ENCODE measurements at regions of chr16 and their contacts with region 1.

Region 1: GRCh38 chr16:30472328-30472942 is at the start of gene ITGAL:
- DNase-seq: peak; percentile 63 to 96 (median 80)
- ATAC-seq: peak; percentile 83
- H3K4me3 ChIP-seq: peak within 1 kb of the TSS; percentile 83
- H3K4me3 Mint-ChIP-seq: peak within 1 kb of the TSS; percentile 96
- H3K27ac ChIP-seq: peak within 1 kb of the TSS; percentile 75 to 94
- H3K27ac Mint-ChIP-seq: peak within 1 kb of the TSS; percentile 90
- H3K4me1 ChIP-seq: peaks cover 81% of the 10 kb centered on the region
- H3K4me1 Mint-ChIP-seq: peaks cover 70% of the 10 kb centered on the region
- H3K27me3 ChIP-seq: no peaks in the 10 kb centered on the region
- H3K27me3 Mint-ChIP-seq: no peaks in the 10 kb centered on the region
- CTCF ChIP-seq: no peak
- total RNA-seq, gene ITGAL: 186 to 187 TPM

Region 2: DNA sequence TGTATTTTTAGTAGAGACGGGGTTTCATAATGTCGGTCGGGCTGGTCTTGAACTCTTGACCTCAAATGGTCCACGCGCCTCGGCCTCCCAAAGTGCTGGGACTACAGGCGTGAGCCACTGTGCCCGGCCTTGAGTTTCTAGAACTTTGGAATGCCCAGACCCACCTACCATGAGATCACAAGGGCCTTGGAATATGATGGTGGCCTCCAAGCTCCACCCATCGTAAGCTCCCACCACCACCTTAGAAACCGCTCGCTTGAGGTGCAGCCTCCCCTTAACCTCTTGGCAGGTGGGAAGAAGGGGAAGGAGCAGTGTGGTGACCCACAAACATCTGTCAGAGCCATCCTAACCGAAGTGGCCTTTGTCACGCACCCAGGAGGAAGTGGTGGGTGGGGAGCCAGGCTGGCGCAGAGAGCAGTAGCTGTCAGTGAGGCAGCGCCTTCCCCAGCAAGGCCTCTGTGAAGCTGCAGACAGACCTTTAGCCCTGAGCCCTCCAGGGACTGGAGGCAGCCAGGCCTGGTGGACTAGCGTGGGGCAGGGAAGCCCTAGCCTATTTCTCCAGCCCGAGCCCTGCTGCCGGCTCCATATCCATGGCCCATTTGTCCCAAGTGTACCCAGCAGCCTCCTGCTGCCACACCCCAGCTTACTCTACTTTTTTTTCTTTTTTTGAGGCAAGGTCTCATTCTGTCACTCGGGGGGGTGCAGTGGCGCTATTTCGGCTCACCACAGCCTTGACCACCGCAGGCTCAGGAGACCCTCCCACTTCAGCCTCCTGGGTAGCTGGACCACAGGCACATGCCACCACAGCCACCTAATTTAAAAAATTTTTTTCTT is 13.7 kb before region 1 on chr16:
- CTCF ChIA-PET with region 1: interaction called, 6 read pairs
- POLR2A ChIA-PET with region 1: interaction called, 170 read pairs
- intact Hi-C with region 1: loop called in 1 of 2 experiments (anchors 2 kb)
- DNase-seq: peak in 13 of 14 experiments; percentile 49 to 93 (median 71)
- ATAC-seq: peak; percentile 94
- H3K4me3 ChIP-seq: peak overlapping the region; percentile 13
- H3K4me3 Mint-ChIP-seq: peak overlapping the region; percentile 60
- H3K27ac ChIP-seq: peak overlapping the region; percentile 55 to 61
- H3K27ac Mint-ChIP-seq: peak overlapping the region; percentile 91
- H3K4me1 ChIP-seq: peaks cover 37% of the 10 kb centered on the region
- H3K4me1 Mint-ChIP-seq: peaks cover 55% of the 10 kb centered on the region
- H3K27me3 ChIP-seq: no peaks in the 10 kb centered on the region
- H3K27me3 Mint-ChIP-seq: no peaks in the 10 kb centered on the region
- CTCF ChIP-seq: no peak

Region 3: GRCh38 chr16:30844671-30845449 is 372.4 kb after region 1 on chr16:
- CTCF ChIA-PET with region 1: no interaction called
- POLR2A ChIA-PET with region 1: no interaction called
- intact Hi-C with region 1: no loop called
- DNase-seq: peak; percentile 52 to 93 (median 79)
- ATAC-seq: peak; percentile 96
- H3K4me3 ChIP-seq: no peak overlapping the region
- H3K4me3 Mint-ChIP-seq: peak overlapping the region; percentile 52
- H3K27ac ChIP-seq: no peak overlapping the region
- H3K27ac Mint-ChIP-seq: peak overlapping the region; percentile 24
- H3K4me1 ChIP-seq: peaks cover 8% of the 10 kb centered on the region
- H3K4me1 Mint-ChIP-seq: peaks cover 11% of the 10 kb centered on the region
- H3K27me3 ChIP-seq: no peaks in the 10 kb centered on the region
- H3K27me3 Mint-ChIP-seq: no peaks in the 10 kb centered on the region
- CTCF ChIP-seq: peak; percentile 91

Region 4: DNA sequence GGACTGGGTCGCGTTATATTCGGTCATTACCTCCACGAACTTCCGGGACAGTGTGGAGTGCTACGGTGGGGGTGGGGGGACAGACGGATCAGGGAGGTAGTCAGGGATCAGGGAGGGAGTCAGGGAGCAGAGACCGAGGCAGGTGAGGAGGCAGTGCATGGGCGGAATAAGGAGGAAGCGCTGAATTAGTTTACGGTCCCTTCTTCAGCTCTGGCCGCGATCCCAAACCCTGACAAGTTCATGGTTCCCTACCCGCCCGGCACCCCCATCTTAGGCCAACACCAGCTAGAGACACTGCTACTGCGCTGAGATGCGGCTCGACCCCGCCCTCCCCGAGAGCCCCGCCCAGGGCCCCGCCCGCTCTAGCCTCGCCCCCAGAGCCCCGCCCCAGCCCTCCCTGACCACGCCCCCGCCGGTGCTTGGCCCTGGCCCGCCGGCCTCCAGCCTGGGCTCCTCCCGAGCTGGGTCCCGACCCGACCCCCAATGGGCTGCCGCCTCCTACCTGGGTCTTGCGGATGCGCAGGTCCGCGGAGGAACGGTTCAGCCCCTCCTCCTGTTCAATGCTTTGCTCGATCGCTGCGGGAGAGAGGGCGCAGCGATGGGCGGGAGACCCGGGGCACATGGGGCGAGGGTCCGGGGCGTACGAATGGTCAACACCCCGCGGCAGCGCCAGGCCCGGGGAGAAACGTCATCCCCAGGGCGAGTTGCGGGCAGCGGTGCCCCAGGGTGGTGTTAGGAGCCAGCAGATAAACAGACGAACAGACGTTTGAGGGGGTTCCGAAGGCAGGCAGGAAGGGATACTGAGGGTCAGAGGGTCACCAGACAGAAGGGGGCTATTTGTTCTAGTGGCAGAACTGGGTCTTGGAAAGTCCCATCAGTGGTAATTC is 524.8 kb after region 1 on chr16:
- CTCF ChIA-PET with region 1: no interaction called
- POLR2A ChIA-PET with region 1: no interaction called
- intact Hi-C with region 1: no loop called
- DNase-seq: peak; percentile 71 to 89 (median 78)
- ATAC-seq: peak; percentile 99
- H3K4me3 ChIP-seq: peak overlapping the region; percentile 58
- H3K4me3 Mint-ChIP-seq: peak overlapping the region; percentile 83
- H3K27ac ChIP-seq: no peak overlapping the region
- H3K27ac Mint-ChIP-seq: peak overlapping the region; percentile 39
- H3K4me1 ChIP-seq: peaks cover 13% of the 10 kb centered on the region
- H3K4me1 Mint-ChIP-seq: peaks cover 3% of the 10 kb centered on the region
- H3K27me3 ChIP-seq: no peaks in the 10 kb centered on the region
- H3K27me3 Mint-ChIP-seq: no peaks in the 10 kb centered on the region
- CTCF ChIP-seq: no peak